ENCODE measurements at regions of chr2 and their contacts with region 1.

Region 1: DNA sequence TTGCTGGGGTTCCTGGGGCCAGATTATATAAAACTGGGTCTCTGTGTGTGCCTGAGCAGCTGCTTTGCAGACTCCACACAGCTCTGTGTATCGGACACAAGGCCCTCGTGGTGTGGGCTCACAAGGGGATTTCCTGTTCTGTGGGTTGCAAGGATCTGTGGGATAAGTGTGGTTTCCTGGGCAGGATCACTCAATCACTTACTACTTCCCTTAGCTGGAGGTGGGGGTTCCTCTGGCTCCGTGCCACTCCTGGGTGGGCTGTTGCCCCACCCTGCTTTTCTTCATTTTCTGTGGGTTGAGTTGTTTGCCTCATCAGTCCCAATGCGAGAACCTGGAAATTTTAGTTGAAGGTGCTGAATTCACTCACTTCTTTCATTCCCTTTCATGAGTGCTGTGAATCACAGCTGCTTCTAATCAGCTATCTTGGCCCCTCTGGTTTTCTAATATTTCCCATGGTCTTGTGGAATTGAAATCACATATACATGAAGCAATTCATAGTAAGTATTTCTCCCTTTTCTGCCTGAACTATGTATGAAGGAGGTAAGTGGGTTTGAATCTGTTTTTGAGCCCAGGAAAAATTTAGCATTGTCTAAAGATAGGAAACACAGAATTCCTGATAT is 196.3 kb downstream of the DCDC2C start:
- DNase-seq: no peak
- ATAC-seq: no peak
- H3K4me3 ChIP-seq: no peak overlapping the region
- H3K4me3 Mint-ChIP-seq: no peak overlapping the region
- H3K27ac ChIP-seq: no peak overlapping the region
- H3K27ac Mint-ChIP-seq: no peak overlapping the region
- H3K4me1 ChIP-seq: no peaks in the 10 kb centered on the region
- H3K4me1 Mint-ChIP-seq: peaks cover 0 to 6% (median 0%) of the 10 kb centered on the region in 3 donors
- H3K27me3 ChIP-seq: peaks cover 0 to 9% of the 10 kb centered on the region in 2 experiments
- H3K27me3 Mint-ChIP-seq: peaks cover 2 to 8% of the 10 kb centered on the region in 2 donors

Region 2: GRCh38 chr2:3728104-3729054 is 171.3 kb before region 1 on chr2:
- CTCF ChIA-PET with region 1: no interaction called
- POLR2A ChIA-PET with region 1: no interaction called
- DNase-seq: peak in 1 of 35 experiments; percentile 11
- ATAC-seq: no peak
- H3K4me3 ChIP-seq: no peak overlapping the region
- H3K4me3 Mint-ChIP-seq: no peak overlapping the region
- H3K27ac ChIP-seq: no peak overlapping the region
- H3K27ac Mint-ChIP-seq: no peak overlapping the region
- H3K4me1 ChIP-seq: no peaks in the 10 kb centered on the region
- H3K4me1 Mint-ChIP-seq: no peaks in the 10 kb centered on the region
- H3K27me3 ChIP-seq: peaks cover 0 to 37% of the 10 kb centered on the region in 2 experiments
- H3K27me3 Mint-ChIP-seq: peaks cover 26 to 28% of the 10 kb centered on the region in 2 donors

Region 3: GRCh38 chr2:3885629-3886628 is 13.7 kb before region 1 on chr2:
- CTCF ChIA-PET with region 1: no interaction called
- POLR2A ChIA-PET with region 1: interaction called in 1 of 2 experiments, 11 read pairs
- DNase-seq: no peak
- ATAC-seq: no peak
- H3K4me3 ChIP-seq: no peak overlapping the region
- H3K4me3 Mint-ChIP-seq: no peak overlapping the region
- H3K27ac ChIP-seq: no peak overlapping the region
- H3K27ac Mint-ChIP-seq: no peak overlapping the region
- H3K4me1 ChIP-seq: no peaks in the 10 kb centered on the region
- H3K4me1 Mint-ChIP-seq: no peaks in the 10 kb centered on the region
- H3K27me3 ChIP-seq: no peaks in the 10 kb centered on the region
- H3K27me3 Mint-ChIP-seq: peaks cover 0 to 3% of the 10 kb centered on the region in 2 donors

Region 4: GRCh38 chr2:3954261-3954660 is 54.6 kb after region 1 on chr2:
- CTCF ChIA-PET with region 1: no interaction called
- POLR2A ChIA-PET with region 1: no interaction called
- DNase-seq: no peak
- ATAC-seq: no peak
- H3K4me3 ChIP-seq: no peak overlapping the region
- H3K4me3 Mint-ChIP-seq: no peak overlapping the region
- H3K27ac ChIP-seq: no peak overlapping the region
- H3K27ac Mint-ChIP-seq: no peak overlapping the region
- H3K4me1 ChIP-seq: no peaks in the 10 kb centered on the region
- H3K4me1 Mint-ChIP-seq: no peaks in the 10 kb centered on the region
- H3K27me3 ChIP-seq: no peaks in the 10 kb centered on the region
- H3K27me3 Mint-ChIP-seq: peaks cover 0 to 3% of the 10 kb centered on the region in 2 donors

Measured in T-cell (primary cell).